Mucosa of descending colon (tissue), 3 donors: ENCODE measurements at regions of chr2 and their contacts with region 1.

Region 1: DNA sequence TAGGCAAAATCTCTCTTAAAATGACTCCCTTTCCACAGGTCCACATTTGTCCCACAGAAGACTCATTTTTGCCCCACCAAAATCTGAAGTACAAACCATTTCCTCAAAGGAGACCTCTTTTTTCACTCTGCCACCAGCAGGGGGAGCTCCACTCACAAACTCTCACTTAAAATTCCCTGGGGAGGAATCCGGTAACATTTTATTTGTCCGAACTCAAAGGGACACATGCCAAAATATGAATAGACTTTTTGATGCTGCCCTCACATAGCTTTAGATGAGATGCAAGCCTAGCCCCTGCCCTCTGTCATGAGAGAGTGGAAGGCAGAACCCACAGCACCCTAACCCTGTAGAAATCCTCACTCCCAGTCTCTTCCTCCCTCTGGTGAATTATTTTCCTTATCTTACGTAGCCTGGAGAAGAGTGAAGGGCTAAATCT is 57.1 kb downstream of the RMDN2 start:
- DNase-seq: peak in 2 of 3 donors; percentile 62 to 78
- ATAC-seq: peak; percentile 62
- H3K4me3 ChIP-seq: no peak overlapping the region
- H3K4me1 ChIP-seq: no peaks in the 10 kb centered on the region
- CTCF ChIP-seq: peak; percentile 55

Region 2: GRCh38 chr2:38115216-38116032 is 133.3 kb after region 1 on chr2:
- intact Hi-C with region 1: loop called in 1 of 2 experiments (anchors 10 kb)
- DNase-seq: peak in 2 of 3 donors; percentile 81 to 93
- ATAC-seq: peak; percentile 93
- H3K4me3 ChIP-seq: no peak overlapping the region
- H3K4me1 ChIP-seq: peaks cover 1% of the 10 kb centered on the region
- CTCF ChIP-seq: peak; percentile 86

Region 3: DNA sequence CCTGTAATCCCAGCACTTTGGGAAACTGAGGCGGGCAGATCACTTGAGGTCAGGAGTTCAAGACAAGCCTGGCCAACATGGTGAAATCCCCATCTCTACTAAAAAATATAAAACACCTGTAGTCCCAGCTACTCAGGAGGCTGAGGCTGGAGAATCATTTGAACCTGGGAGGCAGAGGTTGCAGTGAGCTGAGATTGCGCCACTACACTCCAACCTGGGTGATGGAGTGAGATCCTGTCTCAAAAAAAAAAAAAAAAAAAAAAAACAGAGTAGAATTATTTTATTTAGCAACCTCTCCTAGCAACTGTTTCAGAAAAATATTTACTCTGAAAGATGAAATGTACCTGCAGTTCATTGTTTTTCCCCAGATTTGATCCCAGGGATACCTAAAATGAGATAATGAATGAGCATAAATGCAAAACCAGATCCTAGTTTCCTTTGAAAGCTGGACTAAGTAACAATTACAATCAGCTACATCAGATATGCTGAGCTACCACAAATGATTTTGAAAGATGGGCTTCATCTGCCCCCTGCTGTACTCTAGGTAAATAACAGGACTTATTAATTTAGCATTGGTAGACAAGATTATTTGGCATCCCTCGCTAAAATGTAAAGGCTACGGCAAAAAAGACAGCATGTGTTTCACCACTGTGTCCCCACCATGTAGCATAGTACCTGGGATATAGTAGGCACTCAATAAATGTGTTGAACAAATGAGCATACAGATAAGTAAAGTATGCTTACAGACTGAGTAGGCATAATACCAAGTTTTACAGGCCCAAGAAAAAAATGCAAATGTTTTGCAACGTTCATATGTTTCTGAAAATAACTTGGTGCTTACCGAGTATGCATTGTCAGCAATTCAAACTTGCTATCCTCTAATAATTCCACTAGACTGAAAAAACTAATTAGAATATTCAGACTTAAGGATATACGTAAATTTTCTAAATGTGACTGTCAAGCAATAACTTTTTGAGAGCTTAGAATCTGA is 292.4 kb after region 1 on chr2:
- intact Hi-C with region 1: loop called (anchors 5 to 10 kb)
- DNase-seq: peak in 1 of 3 donors; percentile 51
- ATAC-seq: peak; percentile 70
- H3K4me3 ChIP-seq: no peak overlapping the region
- H3K4me1 ChIP-seq: peaks cover 6% of the 10 kb centered on the region
- CTCF ChIP-seq: peak; percentile 7